ENCODE measurements at regions of chr20 and their contacts with region 1.

Region 1: DNA sequence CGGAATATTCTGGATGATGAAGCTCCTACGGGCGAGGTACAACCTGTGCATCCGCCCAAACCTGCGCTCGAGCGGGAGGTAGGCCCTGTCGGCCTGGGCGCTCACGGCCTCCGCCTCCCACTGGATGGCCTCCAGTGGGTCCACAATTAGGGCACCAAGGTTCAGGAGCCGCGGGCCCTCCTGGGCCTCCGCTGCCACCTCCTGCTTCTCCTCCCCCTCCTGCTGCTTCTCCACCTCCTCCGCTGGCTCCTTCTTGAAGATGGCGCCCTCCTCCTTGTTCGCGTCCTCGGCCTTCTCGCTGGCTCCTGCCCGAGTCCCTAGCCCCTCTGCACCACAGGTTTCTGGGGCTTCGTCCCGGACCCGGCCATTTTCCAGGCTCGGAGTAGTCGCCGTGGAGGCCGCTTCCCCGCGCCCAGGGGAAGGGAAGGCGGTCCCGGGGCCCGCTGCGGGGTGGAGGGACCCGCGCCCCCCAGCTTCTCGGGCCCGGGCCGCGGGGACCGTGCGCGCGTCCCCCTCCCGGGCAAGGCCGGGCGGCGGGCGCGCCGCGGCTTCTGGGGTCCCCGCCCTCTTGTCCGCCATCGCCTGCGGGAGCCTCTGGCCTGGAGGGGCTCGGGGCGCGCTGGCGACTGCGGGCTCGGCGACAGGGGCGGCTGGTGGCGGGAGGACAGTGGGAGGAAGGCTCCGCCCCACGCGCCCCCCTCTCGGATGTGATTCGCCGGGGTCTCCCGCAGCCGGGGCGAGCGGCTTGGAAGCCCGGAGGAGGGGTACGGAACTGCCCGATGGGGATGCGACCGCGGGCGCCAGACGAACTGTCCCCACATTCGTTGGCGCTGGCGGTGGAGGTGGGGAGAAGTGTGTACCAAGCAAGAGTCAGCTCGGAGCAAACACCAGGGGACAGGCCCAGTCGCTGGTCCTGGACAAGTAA is 17.6 kb downstream of the PLAGL2 start:
- DNase-seq: peak; percentile 69

Region 2: GRCh38 chr20:32152421-32153155 is 37.4 kb before region 1 on chr20:
- in situ Hi-C with region 1: loop called (anchors 5 kb)
- DNase-seq: no peak

Region 3: DNA sequence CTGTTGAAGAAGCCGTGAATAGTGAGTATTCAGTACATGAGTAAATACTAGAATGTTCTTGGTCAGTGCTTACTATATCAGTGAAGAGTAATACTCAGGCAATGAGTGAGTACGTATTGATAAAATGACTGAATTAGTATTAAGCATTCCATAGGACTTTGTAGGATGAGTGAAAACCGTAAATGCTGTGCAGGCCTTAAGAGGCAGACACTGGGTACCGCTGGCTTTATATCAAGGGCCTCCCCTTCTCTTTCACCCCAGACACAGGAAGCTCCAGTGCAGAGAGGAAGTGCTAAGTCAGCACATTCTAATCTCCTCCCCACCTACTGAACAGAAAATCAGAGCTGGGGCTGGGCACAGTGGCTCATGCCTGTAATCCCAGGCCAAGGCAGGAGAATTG is 41.9 kb after region 1 on chr20:
- in situ Hi-C with region 1: no loop called
- DNase-seq: no peak

Region 4: DNA sequence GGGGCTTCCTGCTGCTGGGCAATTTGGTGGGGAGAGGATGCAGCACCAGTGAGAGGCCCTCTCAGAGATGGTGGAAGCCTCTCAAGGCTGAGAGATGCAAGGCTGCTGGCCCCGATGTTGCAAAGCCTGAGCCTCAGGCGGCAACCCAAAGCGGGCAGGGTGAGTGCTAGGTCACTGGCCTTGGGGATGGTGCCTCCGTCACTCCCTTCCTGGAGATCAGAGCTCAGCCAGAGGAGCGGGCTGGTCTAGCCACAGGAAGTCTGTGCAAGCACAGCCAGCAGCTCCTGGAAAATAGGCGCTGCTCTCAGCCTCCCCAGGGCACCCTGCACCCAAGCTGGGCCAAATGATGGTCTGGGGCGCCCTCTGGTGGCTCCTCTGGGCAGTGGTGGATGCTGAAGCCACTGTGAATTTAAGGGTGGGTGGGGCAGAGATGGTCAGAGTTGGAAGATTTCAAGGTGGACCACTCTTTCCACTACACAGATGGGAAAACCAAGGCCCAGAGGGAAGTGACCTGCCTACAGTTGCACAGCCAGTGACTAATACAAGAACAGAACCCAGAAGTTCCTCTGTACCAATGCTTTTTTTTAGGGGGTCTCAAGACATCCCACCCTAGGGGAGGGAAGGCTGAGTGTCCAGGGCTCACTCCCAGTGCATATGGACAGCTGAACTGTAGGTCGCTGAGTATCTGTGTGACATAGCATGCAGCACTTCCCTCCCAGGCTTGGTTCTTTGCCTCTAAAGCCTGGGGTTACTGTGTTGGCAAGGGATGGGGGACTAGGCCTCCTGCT is 463.0 kb after region 1 on chr20:
- in situ Hi-C with region 1: no loop called
- DNase-seq: peak; percentile 86

Measured in G401 (cell line).